Prostate gland (tissue), 2 donors: ENCODE measurements at regions of chr2 and their contacts with region 1.

Region 1: DNA sequence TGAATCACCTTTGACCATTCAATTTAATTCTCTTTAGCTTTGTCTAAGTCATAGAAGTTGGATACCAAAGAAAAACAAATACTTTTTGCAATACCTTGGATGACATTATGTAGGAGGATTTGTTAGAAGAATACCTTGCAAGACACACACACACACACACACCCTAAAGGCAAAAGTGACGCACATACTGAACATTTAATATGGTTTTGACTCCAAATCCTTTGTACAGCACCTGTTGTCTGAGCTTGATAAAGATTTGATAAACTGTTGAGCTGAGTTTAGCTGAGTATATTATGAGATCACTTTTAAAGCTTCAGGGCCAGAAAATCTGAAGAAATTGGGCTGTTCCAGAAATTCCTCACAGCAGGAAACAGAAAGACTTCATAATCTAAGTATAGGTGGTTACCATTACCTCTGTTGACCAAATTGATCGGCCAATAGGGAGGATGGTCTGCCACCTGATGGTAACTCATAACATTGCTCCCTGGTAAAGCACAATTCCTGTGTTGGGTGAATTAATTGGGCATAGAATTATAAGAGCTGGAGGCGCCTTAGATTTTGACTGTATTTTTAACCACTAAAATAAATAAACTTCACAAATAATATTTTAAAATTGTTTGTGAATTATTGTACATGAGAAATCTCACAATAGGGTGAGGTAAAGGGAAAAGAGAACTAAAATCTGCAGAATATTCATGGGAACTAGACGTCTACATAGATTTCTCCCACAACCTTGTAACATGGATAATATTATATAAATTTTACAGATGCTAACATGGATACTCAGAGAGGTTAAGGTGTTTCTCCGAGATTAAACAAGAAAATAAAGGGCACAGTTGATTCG is 21.9 kb upstream of the RPIA start:
- DNase-seq: peak; percentile 9
- H3K4me3 ChIP-seq: no peak overlapping the region
- H3K27ac ChIP-seq: no peak overlapping the region
- H3K4me1 ChIP-seq: no peaks in the 10 kb centered on the region
- H3K27me3 ChIP-seq: no peaks in the 10 kb centered on the region
- CTCF ChIP-seq: peak; percentile 15 to 75 (median 56)
- POLR2A ChIP-seq: no peak

Region 2: GRCh38 chr2:88591698-88592097 is 77.9 kb before region 1 on chr2:
- intact Hi-C with region 1: loop called (anchors 2 kb)
- DNase-seq: no peak
- H3K4me3 ChIP-seq: no peak overlapping the region
- H3K27ac ChIP-seq: no peak overlapping the region
- H3K4me1 ChIP-seq: no peaks in the 10 kb centered on the region
- H3K27me3 ChIP-seq: no peaks in the 10 kb centered on the region
- CTCF ChIP-seq: no peak
- POLR2A ChIP-seq: no peak